ENCODE measurements at regions of chr11 and their contacts with region 1.

Region 1: GRCh38 chr11:111870886-111871692 is at the start of gene ALG9:
- DNase-seq: peak; percentile 93
- H3K4me3 Mint-ChIP-seq: peak within 1 kb of the TSS; percentile 89
- H3K27ac Mint-ChIP-seq: peak within 1 kb of the TSS; percentile 83
- H3K4me1 Mint-ChIP-seq: peaks cover 25% of the 10 kb centered on the region
- H3K27me3 Mint-ChIP-seq: no peaks in the 10 kb centered on the region
- total RNA-seq, gene ALG9: 21.3 to 21.9 TPM

Region 2: DNA sequence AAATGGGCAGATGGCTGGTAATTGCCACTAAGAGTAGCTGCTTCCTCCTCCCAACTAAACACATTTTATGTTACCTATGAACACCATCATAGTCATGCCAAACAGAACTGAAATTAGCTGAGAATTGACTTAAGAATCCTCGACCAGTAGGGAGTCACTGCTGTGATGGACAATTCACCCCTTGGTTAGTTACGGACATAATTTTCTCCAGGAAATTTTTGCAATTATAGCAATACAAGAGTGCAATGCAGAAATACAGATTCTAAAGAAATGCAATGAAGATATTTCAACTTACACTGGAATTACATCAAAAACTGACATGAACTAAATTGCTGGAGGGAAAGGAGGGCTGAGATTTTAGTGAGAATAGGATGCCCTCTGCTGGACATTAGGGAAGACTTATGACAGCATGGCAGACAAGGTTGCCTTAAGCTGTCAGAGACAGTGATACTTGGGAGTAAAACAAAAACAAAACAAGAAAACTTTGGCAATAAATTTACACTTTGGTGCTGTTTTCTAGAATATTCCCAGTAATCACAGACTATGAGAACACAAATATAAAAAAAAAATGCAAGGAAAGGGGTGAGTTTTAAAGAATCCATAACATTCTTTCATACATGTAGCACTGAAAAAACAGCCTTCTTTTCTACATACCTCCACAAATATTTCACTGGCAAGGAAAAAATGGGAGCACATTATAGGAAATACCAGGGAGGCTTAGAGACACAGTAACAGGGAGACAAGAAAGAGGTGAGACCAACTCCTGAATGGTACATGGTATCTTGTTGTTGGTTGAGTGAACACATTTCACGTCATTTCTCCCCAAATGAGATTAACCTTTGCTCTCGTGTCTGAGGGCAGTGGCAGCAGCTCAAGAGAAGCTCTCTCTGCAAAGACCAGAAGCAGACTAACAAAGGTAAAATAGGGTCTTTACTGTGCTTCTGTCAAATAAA is 93.7 kb before region 1 on chr11:
- CTCF ChIA-PET with region 1: no interaction called
- intact Hi-C with region 1: no loop called
- DNase-seq: peak; percentile 35
- H3K4me3 Mint-ChIP-seq: no peak overlapping the region
- H3K27ac Mint-ChIP-seq: no peak overlapping the region
- H3K4me1 Mint-ChIP-seq: no peaks in the 10 kb centered on the region
- H3K27me3 Mint-ChIP-seq: no peaks in the 10 kb centered on the region

Region 3: DNA sequence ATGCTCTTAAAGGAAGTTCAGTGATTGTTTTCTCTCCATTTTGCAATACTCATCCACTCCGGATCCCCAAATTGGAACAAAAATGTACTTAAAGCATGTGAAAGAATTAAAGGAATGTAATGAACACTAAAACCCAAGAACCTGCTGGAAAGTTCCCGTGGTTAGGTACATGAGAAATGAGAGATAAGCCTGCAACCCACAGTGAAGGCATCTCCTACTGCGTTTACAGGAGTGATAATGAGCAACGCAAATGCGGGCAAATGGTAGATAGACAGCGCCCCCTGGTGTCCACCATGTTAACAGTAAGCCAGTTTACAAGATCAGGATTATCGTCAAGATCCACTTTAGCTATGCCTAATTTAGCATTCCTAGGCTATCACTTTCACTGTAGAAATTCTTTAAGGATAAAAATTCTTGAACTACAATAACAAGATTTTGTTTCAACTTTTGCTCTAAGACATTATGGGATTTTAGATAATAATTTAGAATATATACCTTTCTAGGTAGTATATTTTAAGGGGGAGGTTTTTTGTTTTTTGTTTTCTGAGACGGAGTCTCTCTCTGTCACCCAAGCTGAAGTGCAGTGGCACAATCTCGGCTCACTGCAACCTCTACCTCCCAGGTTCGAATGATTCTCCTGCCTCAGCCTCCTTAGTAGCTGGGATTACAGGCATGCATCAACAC is 29.6 kb before region 1 on chr11:
- CTCF ChIA-PET with region 1: interaction called, 13 read pairs
- intact Hi-C with region 1: no loop called
- DNase-seq: peak; percentile 96
- H3K4me3 Mint-ChIP-seq: no peak overlapping the region
- H3K27ac Mint-ChIP-seq: no peak overlapping the region
- H3K4me1 Mint-ChIP-seq: no peaks in the 10 kb centered on the region
- H3K27me3 Mint-ChIP-seq: no peaks in the 10 kb centered on the region

Region 4: GRCh38 chr11:112226062-112226830 is 355.2 kb after region 1 on chr11 and contains the start of gene PTS:
- CTCF ChIA-PET with region 1: no interaction called
- intact Hi-C with region 1: loop called (anchors 2 kb)
- DNase-seq: peak; percentile 86
- H3K4me3 Mint-ChIP-seq: peak within 1 kb of the TSS; percentile 88
- H3K27ac Mint-ChIP-seq: peak within 1 kb of the TSS; percentile 91
- H3K4me1 Mint-ChIP-seq: peaks cover 17% of the 10 kb centered on the region
- H3K27me3 Mint-ChIP-seq: no peaks in the 10 kb centered on the region
- total RNA-seq, gene PTS: 34.6 to 39.0 TPM

Region 5: GRCh38 chr11:113457784-113458183 is 1586.7 kb after region 1 on chr11:
- CTCF ChIA-PET with region 1: no interaction called
- intact Hi-C with region 1: no loop called
- DNase-seq: no peak
- H3K4me3 Mint-ChIP-seq: no peak overlapping the region
- H3K27ac Mint-ChIP-seq: no peak overlapping the region
- H3K4me1 Mint-ChIP-seq: no peaks in the 10 kb centered on the region
- H3K27me3 Mint-ChIP-seq: peaks cover 11% of the 10 kb centered on the region

Measured in activated naive CD4-positive, alpha-beta T cell treated with anti-CD3 and anti-CD28 coated beads for 36 hours (primary cell).